Colonic mucosa (tissue), 4 donors: ENCODE measurements at regions of chr19 and their contacts with region 1.

Region 1: GRCh38 chr19:29610563-29611271 is 4.6 kb downstream of the POP4 start:
- DNase-seq: peak; percentile 74
- H3K4me3 ChIP-seq: no peak overlapping the region
- H3K27ac ChIP-seq: no peak overlapping the region
- H3K4me1 ChIP-seq: peaks cover 4% of the 10 kb centered on the region
- H3K27me3 ChIP-seq: no peaks in the 10 kb centered on the region
- CTCF ChIP-seq: peak; percentile 83

Region 2: DNA sequence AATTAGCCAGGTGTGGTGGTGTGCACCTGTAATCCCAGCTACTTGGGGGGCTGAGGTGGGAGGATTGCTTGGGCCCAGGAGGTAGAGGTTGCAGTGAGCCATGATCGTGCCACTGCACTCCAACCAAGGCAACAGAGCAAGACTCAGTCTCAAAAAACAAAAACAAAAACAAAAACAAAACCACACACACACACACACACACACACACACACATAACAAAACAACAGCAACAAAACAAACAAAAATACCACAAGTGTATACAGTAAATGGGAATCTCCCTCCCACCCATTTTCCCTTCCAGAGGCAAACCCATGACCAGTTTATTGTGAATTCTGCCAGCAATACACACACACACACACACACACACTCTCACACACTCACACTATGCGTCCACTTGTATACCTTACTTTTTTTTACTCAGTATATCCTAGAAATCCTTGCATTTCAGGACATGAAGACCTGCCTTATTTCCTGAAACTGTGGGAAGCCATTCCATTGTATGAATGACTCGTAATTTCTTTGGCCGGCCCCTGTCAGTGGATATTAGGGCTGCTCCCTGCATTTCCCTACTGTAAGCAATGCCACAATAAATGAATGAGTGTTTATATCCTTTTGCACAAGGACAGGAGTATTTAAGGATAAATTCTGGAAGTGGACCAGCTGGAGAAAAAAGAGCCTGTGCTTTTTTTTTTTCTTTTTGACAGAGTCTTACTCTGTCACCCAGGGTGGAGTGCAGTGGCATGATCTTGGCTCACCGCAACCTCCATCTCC is 47.7 kb after region 1 on chr19:
- intact Hi-C with region 1: loop called (anchors 5 kb)
- DNase-seq: no peak
- H3K4me3 ChIP-seq: no peak overlapping the region
- H3K27ac ChIP-seq: no peak overlapping the region
- H3K4me1 ChIP-seq: no peaks in the 10 kb centered on the region
- H3K27me3 ChIP-seq: no peaks in the 10 kb centered on the region
- CTCF ChIP-seq: no peak

Region 3: DNA sequence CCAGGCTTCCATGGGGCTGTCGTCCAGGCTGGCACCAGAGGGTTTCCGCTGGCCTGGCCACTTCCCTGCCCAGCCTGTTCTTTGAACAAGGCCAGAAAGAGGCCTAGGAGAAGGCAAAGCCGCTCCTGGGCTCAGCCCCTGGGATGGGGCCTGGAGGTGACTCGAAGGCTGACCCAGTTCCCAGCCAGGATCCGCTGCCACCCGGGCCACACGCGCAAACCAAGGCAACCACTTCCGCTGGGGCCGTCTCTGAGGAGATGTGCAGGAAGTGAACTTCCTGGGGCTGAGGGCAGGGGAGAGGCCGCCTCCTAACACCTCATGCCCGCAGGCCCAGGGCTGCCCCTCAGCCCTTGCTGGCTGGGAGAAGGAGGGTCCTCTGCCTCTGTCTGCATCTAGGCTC is 69.7 kb after region 1 on chr19:
- intact Hi-C with region 1: no loop called
- DNase-seq: peak; percentile 65
- H3K4me3 ChIP-seq: no peak overlapping the region
- H3K27ac ChIP-seq: no peak overlapping the region
- H3K4me1 ChIP-seq: no peaks in the 10 kb centered on the region
- H3K27me3 ChIP-seq: no peaks in the 10 kb centered on the region
- CTCF ChIP-seq: no peak

Region 4: GRCh38 chr19:29694669-29695627 is 84.2 kb after region 1 on chr19:
- intact Hi-C with region 1: loop called (anchors 10 kb)
- DNase-seq: peak; percentile 75
- H3K4me3 ChIP-seq: no peak overlapping the region
- H3K27ac ChIP-seq: no peak overlapping the region
- H3K4me1 ChIP-seq: no peaks in the 10 kb centered on the region
- H3K27me3 ChIP-seq: no peaks in the 10 kb centered on the region
- CTCF ChIP-seq: peak; percentile 96

Region 5: DNA sequence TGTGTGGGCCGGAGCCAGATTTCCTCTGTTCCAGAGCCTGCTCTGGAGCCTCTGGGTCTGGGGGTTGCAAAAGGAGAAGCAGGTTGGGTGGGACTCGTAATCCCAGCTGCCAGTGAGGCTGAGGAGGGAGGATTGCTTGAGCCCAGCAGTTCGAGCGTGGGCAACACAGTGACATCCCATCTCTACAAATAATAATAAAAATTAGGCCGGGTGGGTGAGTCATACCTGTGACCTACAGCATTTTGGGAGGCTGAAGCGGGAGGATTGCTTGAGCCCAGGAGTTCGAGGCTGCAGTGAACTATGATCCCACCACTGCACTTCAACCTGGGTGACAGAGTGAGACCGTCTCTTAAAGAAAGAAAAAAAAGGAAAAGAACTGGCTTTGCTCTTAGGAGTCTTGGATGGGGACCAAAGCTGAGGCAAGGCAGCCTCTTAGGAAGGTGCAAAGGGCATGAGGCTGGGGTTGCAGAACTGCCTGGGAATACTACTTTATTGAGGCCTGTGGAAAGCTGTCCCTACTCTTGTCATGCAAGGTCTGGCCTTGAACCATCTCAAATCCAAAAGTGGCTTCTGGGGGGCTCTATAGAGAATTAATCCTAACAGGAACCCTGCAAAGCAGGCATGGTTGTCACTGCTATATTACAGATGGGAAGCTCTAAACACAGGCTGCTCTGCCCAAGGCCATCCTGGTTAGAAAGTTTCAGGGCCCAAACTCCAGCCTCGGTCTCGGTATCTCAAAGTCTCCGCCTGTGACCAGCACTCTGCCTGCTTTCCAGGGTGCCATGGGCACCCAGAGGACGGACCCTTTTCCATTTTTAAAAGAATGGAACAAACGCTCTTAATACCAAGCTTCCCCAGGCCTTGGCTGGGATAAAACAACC is 105.2 kb after region 1 on chr19:
- intact Hi-C with region 1: loop called (anchors 2 kb)
- DNase-seq: peak; percentile 59
- H3K4me3 ChIP-seq: peak overlapping the region; percentile 95
- H3K27ac ChIP-seq: peak overlapping the region; percentile 94
- H3K4me1 ChIP-seq: peaks cover 11% of the 10 kb centered on the region
- H3K27me3 ChIP-seq: no peaks in the 10 kb centered on the region
- CTCF ChIP-seq: no peak